IMR-90 (cell line): ENCODE measurements at regions of chr11 and their contacts with region 1.

Region 1: GRCh38 chr11:77009533-77010160 is 24.6 kb upstream of the B3GNT6 start:
- DNase-seq: no peak
- ATAC-seq: no peak
- H3K4me3 ChIP-seq: no peak overlapping the region
- H3K27ac ChIP-seq: no peak overlapping the region
- H3K4me1 ChIP-seq: no peaks in the 10 kb centered on the region
- H3K27me3 ChIP-seq: no peaks in the 10 kb centered on the region
- CTCF ChIP-seq: no peak
- POLR2A ChIP-seq: no peak
- RAD21 ChIP-seq: no peak

Region 2: GRCh38 chr11:76944225-76944624 is 65.4 kb before region 1 on chr11:
- CTCF ChIA-PET with region 1: no interaction called
- POLR2A ChIA-PET with region 1: no interaction called
- dilution Hi-C with region 1: no loop called
- in situ Hi-C with region 1: no loop called
- intact Hi-C with region 1: loop called (anchors 5 kb)
- DNase-seq: no peak
- ATAC-seq: no peak
- H3K4me3 ChIP-seq: no peak overlapping the region
- H3K27ac ChIP-seq: no peak overlapping the region
- H3K4me1 ChIP-seq: peaks cover 2% of the 10 kb centered on the region; the same call in 1 of the 2 replicates
- H3K27me3 ChIP-seq: no peaks in the 10 kb centered on the region
- CTCF ChIP-seq: no peak
- POLR2A ChIP-seq: no peak
- RAD21 ChIP-seq: no peak

Region 3: DNA sequence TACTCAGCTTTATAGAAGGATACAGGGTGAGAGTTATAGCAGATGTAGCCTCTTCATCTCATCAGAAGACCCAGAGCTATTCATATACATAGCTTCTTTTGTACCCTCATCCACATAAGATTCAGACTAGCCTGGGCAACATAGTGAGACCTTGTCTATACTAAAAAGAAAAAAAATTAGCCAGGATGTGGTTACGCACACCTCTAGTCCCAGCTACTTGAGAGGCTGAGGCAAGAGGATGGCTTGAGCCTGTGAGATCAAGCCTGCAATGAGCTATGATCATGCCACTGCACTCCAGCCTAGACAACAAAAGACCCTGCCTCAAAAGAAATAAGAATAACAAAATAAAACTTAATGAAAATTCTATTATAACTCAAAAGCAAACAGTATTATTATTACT is 12.1 kb before region 1 on chr11:
- CTCF ChIA-PET with region 1: interaction called, 4 read pairs
- POLR2A ChIA-PET with region 1: no interaction called
- dilution Hi-C with region 1: no loop called
- in situ Hi-C with region 1: no loop called
- intact Hi-C with region 1: loop called (anchors 2 kb)
- DNase-seq: no peak
- ATAC-seq: no peak
- H3K4me3 ChIP-seq: no peak overlapping the region
- H3K27ac ChIP-seq: no peak overlapping the region
- H3K4me1 ChIP-seq: no peaks in the 10 kb centered on the region
- H3K27me3 ChIP-seq: no peaks in the 10 kb centered on the region
- CTCF ChIP-seq: no peak
- POLR2A ChIP-seq: no peak
- RAD21 ChIP-seq: no peak

Region 4: DNA sequence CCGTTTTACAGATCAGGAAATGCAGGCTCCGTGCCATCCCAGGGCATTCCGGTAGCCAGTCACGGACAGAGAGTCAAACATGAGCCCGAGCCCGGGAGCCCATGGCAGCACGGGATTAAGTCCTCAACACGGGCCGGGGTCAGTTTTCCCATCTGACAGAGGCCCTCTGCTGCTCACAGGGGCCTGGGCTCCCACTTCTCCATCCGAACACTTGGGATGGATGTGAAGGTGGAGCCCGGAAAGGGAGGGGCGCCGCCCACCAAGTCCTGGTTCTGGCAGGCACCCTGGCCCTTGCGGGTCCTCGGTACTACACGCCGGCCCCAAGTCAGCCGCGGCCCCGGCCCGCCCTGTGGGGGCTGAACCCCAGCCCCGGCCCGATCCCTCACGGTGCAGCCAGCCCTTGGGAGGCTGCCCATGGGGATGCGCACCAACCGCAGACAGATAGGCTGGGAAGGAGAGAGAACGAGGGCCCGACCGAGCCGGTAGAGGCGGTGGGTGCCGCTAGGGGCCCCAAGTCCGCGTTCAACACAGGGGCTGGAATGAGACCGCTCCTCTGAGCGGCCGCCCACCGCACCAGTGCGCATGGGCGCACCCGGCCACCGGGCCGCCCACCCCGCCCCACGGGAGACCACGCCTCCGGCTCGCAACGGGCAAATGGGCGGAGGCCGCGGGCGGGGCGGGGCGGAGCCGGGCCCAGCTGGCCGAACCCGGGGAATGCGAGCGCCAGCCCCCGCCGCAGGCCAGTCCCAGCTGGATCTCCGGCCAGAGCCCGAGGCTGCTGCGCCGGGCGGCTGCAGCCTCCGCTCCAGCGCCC is 56.8 kb after region 1 on chr11 and contains the start of gene CAPN5:
- CTCF ChIA-PET with region 1: no interaction called
- POLR2A ChIA-PET with region 1: no interaction called
- dilution Hi-C with region 1: no loop called
- in situ Hi-C with region 1: no loop called
- intact Hi-C with region 1: no loop called
- DNase-seq: peak; percentile 92
- ATAC-seq: peak; percentile 97
- H3K4me3 ChIP-seq: peak within 1 kb of the TSS; percentile 72
- H3K27ac ChIP-seq: peak within 1 kb of the TSS; percentile 90
- H3K4me1 ChIP-seq: peaks cover 11% of the 10 kb centered on the region
- H3K27me3 ChIP-seq: no peaks in the 10 kb centered on the region
- CTCF ChIP-seq: peak; percentile 49
- POLR2A ChIP-seq: peak; percentile 92
- RAD21 ChIP-seq: peak; percentile 43
- total RNA-seq, gene CAPN5: 8.1 TPM in 2 replicates